PC-3 (cell line): ENCODE measurements at regions of chr12 and their contacts with region 1.

Region 1: GRCh38 chr12:52805000-52805399 is 8.9 kb downstream of the KRT4 start:
- DNase-seq: no peak
- ATAC-seq: no peak
- H3K4me3 ChIP-seq: no peak overlapping the region
- H3K27ac ChIP-seq: no peak overlapping the region
- H3K4me1 ChIP-seq: peaks cover 19% of the 10 kb centered on the region
- H3K27me3 ChIP-seq: no peaks in the 10 kb centered on the region
- CTCF ChIP-seq: no peak

Region 2: DNA sequence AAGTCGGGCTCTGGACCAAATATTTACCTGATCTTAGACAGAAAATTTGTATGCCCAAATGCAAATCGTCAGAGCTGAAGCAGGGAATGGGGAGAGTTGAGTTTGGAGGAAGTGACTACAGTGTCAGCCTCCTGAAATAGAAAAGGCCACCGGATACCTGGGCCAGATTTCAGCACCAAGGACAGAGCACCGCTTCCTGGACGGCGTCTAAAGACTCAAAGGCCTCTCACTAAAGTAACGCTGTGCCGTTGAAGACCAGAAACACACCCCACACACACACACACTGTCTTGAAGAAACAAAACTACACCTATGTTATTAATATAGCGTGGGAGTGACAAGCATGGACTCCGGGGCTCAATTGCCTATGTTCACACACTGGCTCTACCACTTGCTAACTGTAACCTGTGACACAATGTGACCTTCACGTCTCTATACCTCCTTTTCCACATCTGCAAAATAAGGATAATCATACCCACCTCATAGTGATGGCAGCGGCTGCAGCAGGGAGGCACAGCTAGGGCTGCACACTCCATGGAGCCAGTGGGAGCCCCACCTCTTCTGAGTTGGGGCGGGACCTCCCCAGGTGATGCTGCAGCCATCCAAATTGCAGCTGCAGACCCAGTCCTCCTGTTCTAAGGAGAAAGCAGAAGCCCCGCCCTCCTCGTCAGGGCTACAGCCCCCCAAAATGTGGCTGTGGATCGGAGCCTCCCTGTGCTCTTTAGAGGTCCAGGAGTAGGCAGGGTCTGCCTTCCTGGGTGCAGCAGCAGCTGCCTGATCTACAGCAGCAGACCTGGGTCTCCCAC is 63.4 kb before region 1 on chr12:
- CTCF ChIA-PET with region 1: no interaction called
- POLR2A ChIA-PET with region 1: no interaction called
- intact Hi-C with region 1: loop called (anchors 5 kb)
- DNase-seq: peak; percentile 83
- ATAC-seq: peak; percentile 58
- H3K4me3 ChIP-seq: no peak overlapping the region
- H3K27ac ChIP-seq: no peak overlapping the region
- H3K4me1 ChIP-seq: no peaks in the 10 kb centered on the region
- H3K27me3 ChIP-seq: peaks cover 25% of the 10 kb centered on the region; the same call in 1 of the 2 replicates
- CTCF ChIP-seq: no peak

Region 3: GRCh38 chr12:52818386-52819153 is 13.6 kb after region 1 on chr12:
- CTCF ChIA-PET with region 1: no interaction called
- POLR2A ChIA-PET with region 1: no interaction called
- intact Hi-C with region 1: no loop called
- DNase-seq: no peak
- ATAC-seq: no peak
- H3K4me3 ChIP-seq: no peak overlapping the region
- H3K27ac ChIP-seq: no peak overlapping the region
- H3K4me1 ChIP-seq: peaks cover 26% of the 10 kb centered on the region
- H3K27me3 ChIP-seq: no peaks in the 10 kb centered on the region; the same call in 1 of the 2 replicates
- CTCF ChIP-seq: no peak